Activated CD4-positive, alpha-beta T cell treated with anti-CD3 and anti-CD28 coated beads, Interleukin-2, amount 10 ng/mL, durations not matched to agents 24 days and 14 days (primary cell): ENCODE measurements at regions of chr19 and their contacts with region 1.

Region 1: DNA sequence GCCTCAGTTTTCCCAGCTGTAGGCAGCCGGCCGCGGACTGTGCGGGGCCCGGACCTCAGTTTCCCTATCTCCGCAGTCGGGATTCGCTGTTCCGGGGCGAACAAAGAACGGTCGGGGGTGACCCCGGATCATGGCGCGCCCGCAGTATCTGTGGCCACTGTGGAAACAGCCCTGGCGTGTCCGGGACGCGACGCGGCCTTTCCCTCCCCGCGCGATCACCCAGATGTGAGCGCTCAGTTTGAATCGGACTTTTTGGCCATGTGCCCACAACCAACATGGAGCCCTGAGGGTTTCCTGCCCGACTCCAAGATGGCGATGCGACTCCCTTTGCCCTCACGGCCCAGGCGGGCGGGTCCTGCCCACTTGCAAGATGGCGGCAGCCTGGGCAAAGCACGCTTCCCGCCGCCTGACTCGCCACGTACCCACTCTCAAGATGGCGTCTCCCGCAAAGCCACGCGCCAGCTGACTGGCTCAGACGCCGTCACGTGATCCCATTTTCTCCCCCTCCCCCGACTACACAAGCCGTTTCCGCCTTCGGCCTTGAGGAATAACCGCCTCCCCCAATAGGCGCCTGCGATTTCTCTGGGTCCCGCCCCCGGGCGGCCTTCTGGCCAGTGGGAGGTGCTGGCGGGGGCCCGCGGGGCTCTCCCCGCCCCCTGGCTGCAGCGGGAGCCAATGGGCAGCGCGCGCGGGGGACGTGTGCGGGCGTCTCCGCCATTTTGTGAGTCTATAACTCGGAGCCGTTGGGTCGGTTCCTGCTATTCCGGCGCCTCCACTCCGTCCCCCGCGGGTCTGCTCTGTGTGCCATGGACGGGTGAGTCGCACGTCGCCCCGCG is at the start of gene PTBP1:
- DNase-seq: peak; percentile 100
- H3K4me3 Mint-ChIP-seq: peak within 1 kb of the TSS; percentile 92
- H3K27ac Mint-ChIP-seq: peak within 1 kb of the TSS; percentile 95
- H3K4me1 Mint-ChIP-seq: peaks cover 25% of the 10 kb centered on the region
- H3K27me3 Mint-ChIP-seq: peaks cover 1% of the 10 kb centered on the region
- total RNA-seq, gene PTBP1: 789 and 832 TPM in 2 replicates

Region 2: DNA sequence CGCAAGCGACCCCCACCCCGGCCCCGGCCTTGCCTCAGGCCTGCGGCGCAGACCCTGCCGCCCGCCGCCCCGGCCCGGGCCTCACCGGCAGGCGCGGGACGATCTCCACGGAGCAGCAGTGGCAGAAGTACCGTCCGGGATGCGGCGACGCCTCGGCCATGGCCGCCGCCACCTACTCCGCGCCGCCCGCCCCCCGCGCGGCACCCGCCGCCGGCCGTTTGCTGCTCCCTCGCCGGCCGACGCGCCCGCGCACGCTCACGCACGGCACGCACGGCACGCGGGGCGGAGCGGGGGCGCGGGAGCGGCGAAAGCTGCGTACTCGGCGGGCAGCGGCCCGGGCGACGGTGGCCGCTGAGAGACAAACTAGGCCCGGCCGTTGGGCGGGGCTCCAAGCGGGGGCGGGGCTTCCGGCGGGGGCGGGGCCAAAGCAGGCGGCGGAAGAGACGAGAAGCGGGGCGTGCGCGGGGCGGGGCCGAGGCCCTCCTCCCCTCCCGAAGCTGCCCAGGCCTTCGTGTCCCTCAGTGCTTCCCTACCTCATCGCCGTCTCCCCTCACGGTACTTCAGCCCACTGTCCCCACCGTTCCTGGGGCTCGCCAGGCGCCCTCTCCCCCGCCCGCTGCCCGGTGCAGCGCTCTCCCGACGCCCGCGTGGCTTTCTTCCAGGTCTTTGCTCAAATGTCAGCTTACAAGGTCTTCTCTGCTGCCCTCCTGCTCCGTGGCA is 133.8 kb before region 1 on chr19 and contains the start of gene RNF126:
- intact Hi-C with region 1: loop called (anchors 1 kb)
- DNase-seq: peak; percentile 96
- H3K4me3 Mint-ChIP-seq: peak within 1 kb of the TSS; percentile 94
- H3K27ac Mint-ChIP-seq: peak within 1 kb of the TSS; percentile 93
- H3K4me1 Mint-ChIP-seq: peaks cover 20% of the 10 kb centered on the region
- H3K27me3 Mint-ChIP-seq: peaks cover 2% of the 10 kb centered on the region
- total RNA-seq, gene RNF126: 109 and 110 TPM in 2 replicates

Region 3: DNA sequence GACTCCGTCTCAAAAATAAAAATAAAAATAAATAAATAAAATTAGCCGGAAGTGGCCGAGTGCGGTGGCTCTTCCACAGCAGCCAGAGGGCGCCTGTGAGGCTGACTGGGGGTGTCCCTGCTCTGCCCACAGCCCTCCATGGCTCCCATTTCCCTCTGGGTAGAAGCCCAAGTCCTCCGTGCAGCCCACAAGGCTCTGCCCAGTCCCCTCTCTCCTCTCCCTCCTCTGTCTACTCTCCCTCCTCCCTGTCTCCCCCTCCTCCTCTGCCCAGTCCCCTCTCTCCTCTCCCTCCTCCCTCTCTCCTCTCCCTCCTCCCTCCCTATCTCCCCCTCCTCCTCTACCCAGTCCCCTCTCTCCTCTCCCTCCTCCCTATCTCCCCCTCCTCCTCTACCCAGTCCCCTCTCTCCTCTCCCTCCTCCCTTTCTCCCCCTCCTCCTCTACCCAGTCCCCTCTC is 25.6 kb before region 1 on chr19:
- intact Hi-C with region 1: loop called (anchors 2 kb)
- DNase-seq: peak; percentile 70
- H3K4me3 Mint-ChIP-seq: no peak overlapping the region
- H3K27ac Mint-ChIP-seq: no peak overlapping the region
- H3K4me1 Mint-ChIP-seq: peaks cover 3% of the 10 kb centered on the region
- H3K27me3 Mint-ChIP-seq: peaks cover 4% of the 10 kb centered on the region

Region 4: GRCh38 chr19:843180-843835 is 46.4 kb after region 1 on chr19:
- intact Hi-C with region 1: no loop called
- DNase-seq: no peak
- H3K4me3 Mint-ChIP-seq: no peak overlapping the region
- H3K27ac Mint-ChIP-seq: no peak overlapping the region
- H3K4me1 Mint-ChIP-seq: peaks cover 3% of the 10 kb centered on the region
- H3K27me3 Mint-ChIP-seq: peaks cover 18% of the 10 kb centered on the region

Region 5: DNA sequence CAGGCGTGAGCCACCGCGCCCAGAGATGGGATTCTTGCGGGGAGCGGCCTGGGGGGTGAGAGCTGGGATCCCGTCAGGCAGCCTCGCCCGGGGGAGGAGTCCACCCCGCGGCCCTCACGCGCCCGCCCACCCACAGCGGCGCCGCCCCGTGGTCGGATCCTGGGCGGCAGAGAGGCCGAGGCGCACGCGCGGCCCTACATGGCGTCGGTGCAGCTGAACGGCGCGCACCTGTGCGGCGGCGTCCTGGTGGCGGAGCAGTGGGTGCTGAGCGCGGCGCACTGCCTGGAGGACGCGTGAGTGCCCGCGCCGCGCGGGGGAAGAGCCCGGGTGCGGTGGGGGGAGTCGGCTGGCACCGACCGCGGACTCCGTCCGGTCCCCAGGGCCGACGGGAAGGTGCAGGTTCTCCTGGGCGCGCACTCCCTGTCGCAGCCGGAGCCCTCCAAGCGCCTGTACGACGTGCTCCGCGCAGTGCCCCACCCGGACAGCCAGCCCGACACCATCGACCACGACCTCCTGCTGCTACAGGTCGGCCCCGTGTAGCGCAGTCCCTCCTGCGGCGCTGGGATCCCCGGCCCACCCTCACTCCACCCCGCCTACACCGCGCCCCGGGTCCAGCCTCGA is 63.7 kb after region 1 on chr19:
- intact Hi-C with region 1: no loop called
- DNase-seq: peak; percentile 89
- H3K4me3 Mint-ChIP-seq: no peak overlapping the region
- H3K27ac Mint-ChIP-seq: no peak overlapping the region
- H3K4me1 Mint-ChIP-seq: peaks cover 5% of the 10 kb centered on the region
- H3K27me3 Mint-ChIP-seq: peaks cover 12% of the 10 kb centered on the region

Region 6: GRCh38 chr19:1249298-1249989 is 452.5 kb after region 1 on chr19:
- intact Hi-C with region 1: loop called (anchors 1 kb)
- DNase-seq: peak; percentile 97
- H3K4me3 Mint-ChIP-seq: peak overlapping the region; percentile 76
- H3K27ac Mint-ChIP-seq: peak overlapping the region; percentile 63
- H3K4me1 Mint-ChIP-seq: peaks cover 14% of the 10 kb centered on the region
- H3K27me3 Mint-ChIP-seq: no peaks in the 10 kb centered on the region